Naive thymus-derived CD4-positive, alpha-beta T cell (primary cell): ENCODE measurements at regions of chr14 and their contacts with region 1.

Region 1: GRCh38 chr14:54902521-54903420 is at the start of gene GCH1:
- DNase-seq: peak; percentile 63 to 85 (median 71)
- ATAC-seq: peak; percentile 88
- H3K4me3 ChIP-seq: peak within 1 kb of the TSS; percentile 99
- H3K4me3 Mint-ChIP-seq: peak within 1 kb of the TSS; percentile 82 to 94 (median 90)
- H3K27ac ChIP-seq: peak within 1 kb of the TSS; percentile 88
- H3K27ac Mint-ChIP-seq: peak within 1 kb of the TSS; percentile 66 to 95 (median 91)
- H3K4me1 ChIP-seq: peaks cover under 1 to 9% of the 10 kb centered on the region in 2 donors
- H3K4me1 Mint-ChIP-seq: peaks cover 15 to 43% (median 31%) of the 10 kb centered on the region in 7 donors
- H3K27me3 ChIP-seq: no peaks in the 10 kb centered on the region
- H3K27me3 Mint-ChIP-seq: no peaks in the 10 kb centered on the region
- total RNA-seq, gene GCH1: 21.4 to 64.1 (median 23.2) TPM

Region 2: DNA sequence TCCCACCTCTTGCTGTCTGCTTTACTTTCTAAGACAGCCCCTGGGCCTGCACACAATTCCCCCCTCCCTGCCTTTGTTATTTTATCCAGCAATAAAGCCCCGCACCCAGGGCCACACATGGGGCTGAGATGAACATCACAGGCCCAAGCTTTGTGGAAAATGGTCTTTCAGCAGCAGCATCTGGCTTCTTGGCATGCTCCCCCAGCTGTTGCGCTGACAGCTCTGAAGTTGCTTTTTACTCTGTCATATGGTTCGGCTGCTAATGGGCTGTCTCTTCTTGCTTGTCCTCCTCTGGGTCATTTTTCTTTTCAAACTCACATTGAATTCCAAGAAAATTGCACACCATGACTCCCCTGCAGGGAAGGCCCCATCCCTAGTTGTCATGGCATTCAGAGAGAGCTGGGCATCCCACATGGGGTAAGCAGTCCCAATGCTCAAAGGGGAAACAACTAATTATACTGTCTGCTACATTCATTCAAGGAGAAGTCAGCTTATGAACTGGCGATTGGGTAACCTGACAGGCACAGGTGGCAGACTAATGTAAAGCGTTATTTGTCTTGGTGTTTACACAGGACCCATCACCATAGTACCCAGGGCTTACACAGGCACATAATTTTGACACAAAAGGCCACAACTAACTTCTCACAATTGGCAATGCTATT is 580.0 kb before region 1 on chr14:
- CTCF ChIA-PET with region 1: no interaction called
- POLR2A ChIA-PET with region 1: no interaction called
- intact Hi-C with region 1: no loop called
- DNase-seq: no peak
- ATAC-seq: no peak
- H3K4me3 ChIP-seq: no peak overlapping the region
- H3K4me3 Mint-ChIP-seq: no peak overlapping the region
- H3K27ac ChIP-seq: no peak overlapping the region
- H3K27ac Mint-ChIP-seq: no peak overlapping the region
- H3K4me1 ChIP-seq: no peaks in the 10 kb centered on the region
- H3K4me1 Mint-ChIP-seq: no peaks in the 10 kb centered on the region
- H3K27me3 ChIP-seq: no peaks in the 10 kb centered on the region
- H3K27me3 Mint-ChIP-seq: peaks cover 0 to 24% (median 6%) of the 10 kb centered on the region in 5 donors

Region 3: GRCh38 chr14:54396493-54397335 is 506.1 kb before region 1 on chr14 and contains the start of gene CDKN3:
- CTCF ChIA-PET with region 1: no interaction called
- POLR2A ChIA-PET with region 1: no interaction called
- intact Hi-C with region 1: loop called in 1 of 2 experiments (anchors 2 kb)
- DNase-seq: peak; percentile 91 to 96 (median 95)
- ATAC-seq: peak; percentile 98
- H3K4me3 ChIP-seq: peak within 1 kb of the TSS; percentile 85
- H3K4me3 Mint-ChIP-seq: peak within 1 kb of the TSS; percentile 81 to 96 (median 90)
- H3K27ac ChIP-seq: peak within 1 kb of the TSS; percentile 46
- H3K27ac Mint-ChIP-seq: peak within 1 kb of the TSS; percentile 24 to 93 (median 83)
- H3K4me1 ChIP-seq: peaks cover 0 to 9% of the 10 kb centered on the region in 2 donors
- H3K4me1 Mint-ChIP-seq: peaks cover 0 to 38% (median 12%) of the 10 kb centered on the region in 7 donors
- H3K27me3 ChIP-seq: no peaks in the 10 kb centered on the region
- H3K27me3 Mint-ChIP-seq: peaks cover 0 to 2% (median 0%) of the 10 kb centered on the region in 5 donors
- total RNA-seq, gene CDKN3: 0.93 to 48.1 (median 3.0) TPM

Region 4: DNA sequence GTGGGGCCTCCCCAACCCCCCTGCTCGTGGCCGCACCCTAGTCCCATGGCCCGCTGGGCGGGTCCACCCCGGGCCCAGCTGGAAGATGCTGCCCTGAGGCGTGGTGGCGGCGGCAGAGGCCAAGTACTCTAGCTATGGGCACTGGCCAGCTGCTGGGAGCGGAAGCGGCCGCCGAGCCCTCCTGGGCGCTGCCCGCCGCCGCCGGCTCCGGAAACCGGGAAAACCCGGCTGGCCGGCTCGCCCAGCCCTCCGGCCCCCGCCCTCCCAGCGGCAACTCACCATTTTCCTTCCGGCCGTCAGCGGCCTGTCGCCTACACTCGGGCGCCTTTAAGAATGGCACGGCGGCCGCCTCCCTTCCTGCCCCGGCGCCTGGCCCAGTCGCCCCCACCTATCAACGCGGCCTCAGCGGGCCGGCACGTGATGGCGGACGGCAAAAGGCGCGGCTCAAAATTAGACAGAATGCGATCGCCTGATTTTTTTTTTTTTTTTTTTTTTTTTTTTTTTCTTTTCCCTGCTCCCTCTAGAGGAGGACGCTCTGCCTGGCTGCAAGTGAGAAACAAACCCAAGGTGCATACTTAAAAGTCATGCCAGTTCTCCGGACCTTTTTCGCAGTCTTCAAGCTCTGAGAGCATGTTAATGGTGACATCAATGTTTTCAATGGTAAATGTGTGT is 414.0 kb before region 1 on chr14 and contains the start of gene GMFB:
- CTCF ChIA-PET with region 1: no interaction called
- POLR2A ChIA-PET with region 1: interaction called, 3 read pairs
- intact Hi-C with region 1: loop called in 1 of 2 experiments (anchors 10 kb)
- DNase-seq: peak; percentile 72 to 88 (median 84)
- ATAC-seq: peak; percentile 97
- H3K4me3 ChIP-seq: peak within 1 kb of the TSS; percentile 65
- H3K4me3 Mint-ChIP-seq: peak within 1 kb of the TSS; percentile 80 to 96 (median 92)
- H3K27ac ChIP-seq: peak within 1 kb of the TSS; percentile 86
- H3K27ac Mint-ChIP-seq: peak within 1 kb of the TSS; percentile 77 to 99 (median 97)
- H3K4me1 ChIP-seq: peaks cover 17 to 18% of the 10 kb centered on the region in 2 donors
- H3K4me1 Mint-ChIP-seq: peaks cover 42 to 69% (median 63%) of the 10 kb centered on the region in 7 donors
- H3K27me3 ChIP-seq: no peaks in the 10 kb centered on the region
- H3K27me3 Mint-ChIP-seq: peaks cover 0 to 3% (median 0%) of the 10 kb centered on the region in 5 donors
- total RNA-seq, gene GMFB: 28.9 to 39.9 (median 34.7) TPM

Region 5: GRCh38 chr14:54805521-54806322 is 97.0 kb before region 1 on chr14:
- CTCF ChIA-PET with region 1: interaction called, 3 read pairs
- POLR2A ChIA-PET with region 1: interaction called, 3 read pairs
- intact Hi-C with region 1: loop called in 1 of 2 experiments (anchors 1 kb)
- DNase-seq: peak; percentile 38 to 75 (median 56)
- ATAC-seq: peak; percentile 87
- H3K4me3 ChIP-seq: no peak overlapping the region
- H3K4me3 Mint-ChIP-seq: peak overlapping the region in 5 of 10 donors; percentile 20 to 58 (median 42)
- H3K27ac ChIP-seq: no peak overlapping the region
- H3K27ac Mint-ChIP-seq: peak overlapping the region in 1 of 9 donors; percentile 28
- H3K4me1 ChIP-seq: no peaks in the 10 kb centered on the region
- H3K4me1 Mint-ChIP-seq: peaks cover 0 to 6% (median 4%) of the 10 kb centered on the region in 7 donors
- H3K27me3 ChIP-seq: no peaks in the 10 kb centered on the region
- H3K27me3 Mint-ChIP-seq: peaks cover 10 to 27% (median 20%) of the 10 kb centered on the region in 5 donors

Region 6: DNA sequence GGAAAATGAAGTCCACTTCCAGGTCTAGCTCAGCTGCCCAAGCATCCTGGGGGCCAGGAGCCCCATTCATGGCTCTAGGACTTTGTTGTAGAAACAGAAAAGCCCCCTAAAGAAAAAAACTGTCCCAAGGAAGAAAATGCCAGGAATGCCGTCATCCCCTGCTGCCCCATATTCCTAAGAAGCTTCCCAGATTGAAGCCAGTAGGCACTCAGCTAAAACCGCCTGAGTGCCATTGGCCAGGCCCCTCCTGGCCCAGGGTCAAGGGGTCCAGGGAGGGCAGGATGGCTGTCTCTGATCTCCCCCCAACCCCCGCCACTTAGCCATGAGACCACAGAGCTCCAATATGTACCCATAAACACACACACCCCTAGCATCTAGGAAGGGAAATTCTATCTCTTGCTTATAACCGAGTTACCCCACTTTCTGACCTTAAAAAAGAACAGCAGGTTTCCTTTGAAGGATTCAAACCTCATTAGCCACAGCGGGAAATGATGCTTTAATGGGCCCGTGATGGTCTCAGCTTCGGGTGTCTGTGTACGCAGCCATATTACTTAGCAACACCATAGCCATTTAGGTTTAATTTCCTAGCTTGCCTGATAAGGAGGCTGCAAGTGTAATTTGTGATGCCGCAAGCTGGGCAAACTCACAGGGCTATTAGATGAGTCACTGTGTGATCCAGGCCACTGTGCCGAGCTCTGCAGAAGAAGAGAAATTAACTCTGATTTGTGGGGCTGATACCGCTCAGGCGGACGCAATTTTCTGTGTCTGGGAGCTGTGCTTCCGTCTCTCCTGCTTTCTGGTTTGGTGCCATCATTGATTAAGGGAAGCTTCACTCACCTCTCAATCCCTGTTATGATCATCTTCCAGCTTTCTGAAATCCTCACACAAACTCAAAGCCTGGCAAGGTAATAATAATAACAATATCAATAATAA is 84.3 kb before region 1 on chr14:
- CTCF ChIA-PET with region 1: no interaction called
- POLR2A ChIA-PET with region 1: no interaction called
- intact Hi-C with region 1: no loop called
- DNase-seq: no peak
- ATAC-seq: no peak
- H3K4me3 ChIP-seq: no peak overlapping the region
- H3K4me3 Mint-ChIP-seq: no peak overlapping the region
- H3K27ac ChIP-seq: no peak overlapping the region
- H3K27ac Mint-ChIP-seq: no peak overlapping the region
- H3K4me1 ChIP-seq: no peaks in the 10 kb centered on the region
- H3K4me1 Mint-ChIP-seq: no peaks in the 10 kb centered on the region
- H3K27me3 ChIP-seq: no peaks in the 10 kb centered on the region
- H3K27me3 Mint-ChIP-seq: peaks cover 6 to 21% (median 13%) of the 10 kb centered on the region in 5 donors

Region 7: DNA sequence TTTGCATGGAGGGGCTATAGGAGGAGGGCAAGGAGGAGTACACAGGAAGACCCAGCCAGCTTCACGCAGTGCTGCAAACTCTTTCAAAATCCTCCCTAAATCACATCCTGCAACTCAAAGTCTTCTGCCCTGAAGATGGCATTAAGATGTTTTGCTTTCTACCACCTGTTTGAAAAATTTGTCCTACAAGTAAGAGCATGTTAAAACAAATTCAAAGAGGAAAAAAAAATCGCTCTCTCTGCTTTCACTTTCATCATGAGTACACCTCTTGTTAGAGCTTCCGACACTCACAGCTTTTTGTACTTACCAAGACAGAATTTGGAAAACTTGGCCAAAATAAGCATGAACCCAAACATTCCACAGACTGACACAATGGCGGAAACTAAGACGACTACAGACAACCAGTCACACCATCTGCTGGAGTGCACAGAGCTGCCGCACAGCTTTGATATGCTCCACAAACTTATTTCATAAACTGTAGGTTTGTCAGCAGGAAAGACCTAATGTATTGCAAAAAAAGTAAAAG is 21.5 kb before region 1 on chr14:
- CTCF ChIA-PET with region 1: interaction called, 12 read pairs
- POLR2A ChIA-PET with region 1: interaction called, 23 read pairs
- intact Hi-C with region 1: loop called (anchors 1 kb)
- DNase-seq: peak in 7 of 9 donors; percentile 55 to 74 (median 72)
- ATAC-seq: peak; percentile 77
- H3K4me3 ChIP-seq: peak overlapping the region; percentile 70
- H3K4me3 Mint-ChIP-seq: peak overlapping the region; percentile 85 to 97 (median 90)
- H3K27ac ChIP-seq: peak overlapping the region; percentile 79
- H3K27ac Mint-ChIP-seq: peak overlapping the region; percentile 90 to 99 (median 96)
- H3K4me1 ChIP-seq: peaks cover 7 to 17% of the 10 kb centered on the region in 2 donors
- H3K4me1 Mint-ChIP-seq: peaks cover 28 to 66% (median 60%) of the 10 kb centered on the region in 7 donors
- H3K27me3 ChIP-seq: no peaks in the 10 kb centered on the region
- H3K27me3 Mint-ChIP-seq: no peaks in the 10 kb centered on the region

Region 8: GRCh38 chr14:54922598-54922997 is 19.8 kb after region 1 on chr14:
- CTCF ChIA-PET with region 1: no interaction called
- POLR2A ChIA-PET with region 1: no interaction called
- intact Hi-C with region 1: no loop called
- DNase-seq: no peak
- ATAC-seq: no peak
- H3K4me3 ChIP-seq: no peak overlapping the region
- H3K4me3 Mint-ChIP-seq: no peak overlapping the region
- H3K27ac ChIP-seq: no peak overlapping the region
- H3K27ac Mint-ChIP-seq: no peak overlapping the region
- H3K4me1 ChIP-seq: no peaks in the 10 kb centered on the region
- H3K4me1 Mint-ChIP-seq: peaks cover 0 to 7% (median 0%) of the 10 kb centered on the region in 7 donors
- H3K27me3 ChIP-seq: no peaks in the 10 kb centered on the region
- H3K27me3 Mint-ChIP-seq: peaks cover 0 to 11% (median 0%) of the 10 kb centered on the region in 5 donors

Region 9: DNA sequence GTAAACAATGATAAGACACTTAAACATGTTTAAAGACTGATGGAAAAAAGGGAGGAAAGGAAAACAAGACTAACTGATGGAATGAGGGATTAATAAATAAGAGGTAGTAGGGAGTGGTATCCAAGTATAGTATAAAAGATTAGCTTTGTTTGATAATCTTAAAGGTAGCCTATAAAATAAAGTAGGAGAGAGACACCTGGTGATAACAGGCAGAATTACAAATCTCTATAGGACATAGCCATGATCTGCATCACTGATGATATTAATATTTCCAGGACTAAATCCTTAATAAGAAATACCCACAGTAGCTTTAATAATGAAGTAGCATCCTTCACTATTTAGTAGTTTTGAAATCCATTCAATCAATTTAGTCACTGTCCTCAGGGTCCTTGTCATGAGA is 258.2 kb after region 1 on chr14:
- CTCF ChIA-PET with region 1: no interaction called
- POLR2A ChIA-PET with region 1: no interaction called
- intact Hi-C with region 1: loop called in 1 of 2 experiments (anchors 5 kb)
- DNase-seq: peak in 5 of 9 donors; percentile 6 to 37 (median 16)
- ATAC-seq: peak; percentile 68
- H3K4me3 ChIP-seq: no peak overlapping the region
- H3K4me3 Mint-ChIP-seq: no peak overlapping the region
- H3K27ac ChIP-seq: no peak overlapping the region
- H3K27ac Mint-ChIP-seq: peak overlapping the region in 1 of 9 donors; percentile 60
- H3K4me1 ChIP-seq: no peaks in the 10 kb centered on the region
- H3K4me1 Mint-ChIP-seq: peaks cover 0 to 20% (median 9%) of the 10 kb centered on the region in 7 donors
- H3K27me3 ChIP-seq: no peaks in the 10 kb centered on the region
- H3K27me3 Mint-ChIP-seq: peaks cover 0 to 4% (median 0%) of the 10 kb centered on the region in 5 donors

Region 10: GRCh38 chr14:55579724-55580469 is 677.1 kb after region 1 on chr14 and contains the start of gene KTN1:
- CTCF ChIA-PET with region 1: no interaction called
- POLR2A ChIA-PET with region 1: no interaction called
- intact Hi-C with region 1: loop called in 1 of 2 experiments (anchors 1 kb)
- DNase-seq: peak; percentile 77 to 90 (median 88)
- ATAC-seq: peak; percentile 94
- H3K4me3 ChIP-seq: peak within 1 kb of the TSS; percentile 93
- H3K4me3 Mint-ChIP-seq: peak within 1 kb of the TSS; percentile 93 to 98 (median 95)
- H3K27ac ChIP-seq: peak within 1 kb of the TSS; percentile 86
- H3K27ac Mint-ChIP-seq: peak within 1 kb of the TSS; percentile 90 to 97 (median 93)
- H3K4me1 ChIP-seq: peaks cover 20 to 34% of the 10 kb centered on the region in 2 donors
- H3K4me1 Mint-ChIP-seq: peaks cover 20 to 28% (median 27%) of the 10 kb centered on the region in 7 donors
- H3K27me3 ChIP-seq: no peaks in the 10 kb centered on the region
- H3K27me3 Mint-ChIP-seq: no peaks in the 10 kb centered on the region
- total RNA-seq, gene KTN1: 87.3 to 131 (median 105) TPM

Region 11: GRCh38 chr14:56294130-56294529 is 1391.4 kb after region 1 on chr14:
- CTCF ChIA-PET with region 1: no interaction called
- POLR2A ChIA-PET with region 1: no interaction called
- intact Hi-C with region 1: no loop called
- DNase-seq: no peak
- ATAC-seq: peak; percentile 66
- H3K4me3 ChIP-seq: no peak overlapping the region
- H3K4me3 Mint-ChIP-seq: no peak overlapping the region
- H3K27ac ChIP-seq: no peak overlapping the region
- H3K27ac Mint-ChIP-seq: no peak overlapping the region
- H3K4me1 ChIP-seq: no peaks in the 10 kb centered on the region
- H3K4me1 Mint-ChIP-seq: no peaks in the 10 kb centered on the region
- H3K27me3 ChIP-seq: no peaks in the 10 kb centered on the region
- H3K27me3 Mint-ChIP-seq: no peaks in the 10 kb centered on the region